Activated B cell treated with CpG ODN at 0.5 μM for 24 hours (primary cell): ENCODE measurements at regions of chr10 and their contacts with region 1.

Region 1: GRCh38 chr10:3068201-3068967 is 1.0 kb downstream of the PFKP start:
- DNase-seq: peak; percentile 44
- ATAC-seq: peak; percentile 25
- H3K4me3 Mint-ChIP-seq: peak overlapping the region; percentile 90
- H3K27ac Mint-ChIP-seq: peak overlapping the region; percentile 50
- H3K4me1 Mint-ChIP-seq: peaks cover 35% of the 10 kb centered on the region
- H3K27me3 Mint-ChIP-seq: no peaks in the 10 kb centered on the region
- CTCF ChIP-seq: no peak

Region 2: DNA sequence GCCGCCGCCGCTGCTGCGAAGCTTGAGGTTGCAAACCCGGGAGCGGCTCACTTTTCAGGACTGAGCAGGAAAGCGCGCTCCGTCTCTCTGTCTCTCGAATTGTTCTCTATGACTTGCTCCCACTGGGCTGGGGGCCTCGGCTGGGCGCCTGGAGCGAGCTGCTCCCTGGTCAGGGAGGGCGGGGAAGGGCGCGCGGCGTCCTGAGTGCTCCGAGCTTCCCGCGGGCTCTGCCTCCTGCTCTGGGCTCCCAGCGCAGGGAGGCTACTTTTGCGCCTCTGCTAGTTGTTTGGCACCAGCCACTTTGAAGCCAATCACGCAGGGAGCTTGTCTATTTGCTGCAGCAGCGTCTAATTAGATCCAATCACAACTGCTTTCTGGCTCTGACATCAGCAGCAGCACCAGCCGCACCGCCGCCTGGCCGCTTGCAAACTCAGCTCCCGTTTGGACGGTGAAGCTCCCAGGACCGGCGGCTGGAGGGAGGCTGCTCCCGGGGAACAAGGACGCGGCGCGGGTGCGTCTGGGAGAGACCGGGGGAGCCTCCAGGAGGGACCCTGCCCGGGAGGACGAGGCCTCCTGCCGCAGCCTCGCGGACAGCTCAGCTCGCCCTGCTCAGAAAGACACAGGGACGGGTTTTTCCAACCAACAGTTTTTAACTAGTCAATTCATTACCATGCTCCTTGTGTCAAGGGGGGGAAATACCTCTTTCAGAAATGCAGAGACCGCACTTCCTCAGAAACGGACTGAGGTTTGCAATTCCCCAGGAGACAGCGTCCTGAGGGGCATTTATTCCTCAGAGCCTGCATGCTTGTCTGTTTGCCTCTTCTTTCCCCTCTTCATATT is 1330.9 kb before region 1 on chr10 and contains the start of gene ADARB2:
- CTCF ChIA-PET with region 1: no interaction called
- POLR2A ChIA-PET with region 1: no interaction called
- intact Hi-C with region 1: loop called (anchors 10 kb)
- DNase-seq: peak; percentile 30
- ATAC-seq: peak; percentile 49
- H3K4me3 Mint-ChIP-seq: peak within 1 kb of the TSS; percentile 70
- H3K27ac Mint-ChIP-seq: no peak within 1 kb of the TSS
- H3K4me1 Mint-ChIP-seq: peaks cover 37% of the 10 kb centered on the region
- H3K27me3 Mint-ChIP-seq: peaks cover 66% of the 10 kb centered on the region
- CTCF ChIP-seq: no peak
- total RNA-seq, gene ADARB2: 0.10 and 0.11 TPM in 2 replicates

Region 3: DNA sequence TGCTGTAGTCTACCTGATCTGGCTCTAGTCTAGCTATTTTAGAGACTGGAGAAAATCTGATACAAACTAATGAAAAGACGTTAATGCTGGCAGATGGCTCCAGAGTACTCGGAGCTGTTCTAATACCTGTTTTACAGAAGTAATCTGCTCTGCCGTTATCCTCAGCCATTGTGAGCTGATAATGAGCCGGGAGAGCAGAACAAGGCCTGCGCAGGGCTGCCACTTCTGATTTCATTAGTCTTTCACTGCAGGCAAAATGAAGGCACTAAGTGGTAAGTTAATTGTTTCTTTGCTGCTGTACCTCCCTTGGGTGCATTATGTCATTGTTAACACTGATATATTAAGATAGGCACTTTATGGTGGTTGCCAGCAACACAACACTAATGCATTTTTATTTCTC is 457.4 kb before region 1 on chr10:
- CTCF ChIA-PET with region 1: no interaction called
- POLR2A ChIA-PET with region 1: no interaction called
- intact Hi-C with region 1: no loop called
- DNase-seq: no peak
- ATAC-seq: no peak
- H3K4me3 Mint-ChIP-seq: no peak overlapping the region
- H3K27ac Mint-ChIP-seq: no peak overlapping the region
- H3K4me1 Mint-ChIP-seq: no peaks in the 10 kb centered on the region
- H3K27me3 Mint-ChIP-seq: no peaks in the 10 kb centered on the region
- CTCF ChIP-seq: no peak

Region 4: GRCh38 chr10:3036155-3037021 is 32.0 kb before region 1 on chr10:
- CTCF ChIA-PET with region 1: no interaction called
- POLR2A ChIA-PET with region 1: no interaction called
- intact Hi-C with region 1: loop called (anchors 2 kb)
- DNase-seq: no peak
- ATAC-seq: peak; percentile 90
- H3K4me3 Mint-ChIP-seq: peak overlapping the region; percentile 25
- H3K27ac Mint-ChIP-seq: peak overlapping the region; percentile 78
- H3K4me1 Mint-ChIP-seq: peaks cover 45% of the 10 kb centered on the region
- H3K27me3 Mint-ChIP-seq: no peaks in the 10 kb centered on the region
- CTCF ChIP-seq: no peak

Region 5: GRCh38 chr10:3172446-3173170 is 104.2 kb after region 1 on chr10 and contains the start of gene PITRM1:
- CTCF ChIA-PET with region 1: no interaction called
- POLR2A ChIA-PET with region 1: no interaction called
- intact Hi-C with region 1: loop called (anchors 1 kb)
- DNase-seq: peak; percentile 96
- ATAC-seq: peak; percentile 92
- H3K4me3 Mint-ChIP-seq: peak within 1 kb of the TSS; percentile 85
- H3K27ac Mint-ChIP-seq: peak within 1 kb of the TSS; percentile 91
- H3K4me1 Mint-ChIP-seq: peaks cover 23% of the 10 kb centered on the region
- H3K27me3 Mint-ChIP-seq: no peaks in the 10 kb centered on the region
- CTCF ChIP-seq: no peak
- total RNA-seq, gene PITRM1: 59.6 and 60.7 TPM in 2 replicates